ENCODE measurements at regions of chr21 and their contacts with region 1.

Region 1: DNA sequence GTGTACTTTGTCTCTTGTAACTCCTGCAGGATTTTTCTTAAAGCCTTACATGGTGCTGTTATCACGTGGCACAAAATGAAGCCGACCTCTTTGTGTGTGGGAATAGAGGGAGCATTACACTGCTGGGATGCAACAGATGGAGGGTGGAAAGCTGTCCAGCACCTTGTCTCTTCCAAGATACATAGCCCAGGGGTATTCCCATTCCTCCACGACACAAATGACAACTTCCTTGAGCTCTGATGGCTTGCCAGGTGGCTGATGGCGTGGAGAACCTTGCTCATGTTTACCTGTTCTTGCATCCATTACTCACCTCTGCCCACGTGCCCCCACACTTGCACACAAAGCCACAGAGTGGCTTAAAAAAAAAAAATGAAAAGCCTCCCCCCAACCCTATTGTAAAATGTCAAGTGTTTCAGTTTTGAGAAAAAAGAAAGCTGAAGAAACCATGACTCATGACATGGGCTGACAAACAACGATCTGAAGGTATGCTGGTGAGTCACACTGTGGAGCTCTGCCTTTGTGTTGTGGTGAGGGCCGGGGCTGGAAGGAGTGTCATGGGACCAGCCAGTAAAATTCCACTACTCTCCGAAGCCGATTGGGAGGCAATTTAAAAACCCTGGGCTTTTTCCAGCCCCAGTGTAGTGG is 32.0 kb upstream of the ATP5PO start:
- DNase-seq: peak; percentile 64 to 97 (median 82)
- ATAC-seq: peak; percentile 56
- H3K4me3 ChIP-seq: peak overlapping the region; percentile 18 to 25
- H3K4me3 Mint-ChIP-seq: peak overlapping the region; percentile 75
- H3K27ac ChIP-seq: peak overlapping the region; percentile 94 to 95
- H3K27ac Mint-ChIP-seq: peak overlapping the region; percentile 99
- H3K4me1 ChIP-seq: peaks cover 66% of the 10 kb centered on the region
- H3K4me1 Mint-ChIP-seq: peaks cover 78% of the 10 kb centered on the region
- H3K27me3 ChIP-seq: no peaks in the 10 kb centered on the region
- H3K27me3 Mint-ChIP-seq: no peaks in the 10 kb centered on the region
- CTCF ChIP-seq: no peak

Region 2: GRCh38 chr21:33871171-33871570 is 76.4 kb before region 1 on chr21:
- CTCF ChIA-PET with region 1: no interaction called
- POLR2A ChIA-PET with region 1: no interaction called
- intact Hi-C with region 1: no loop called
- DNase-seq: no peak
- ATAC-seq: no peak
- H3K4me3 ChIP-seq: no peak overlapping the region
- H3K4me3 Mint-ChIP-seq: no peak overlapping the region
- H3K27ac ChIP-seq: no peak overlapping the region
- H3K27ac Mint-ChIP-seq: no peak overlapping the region
- H3K4me1 ChIP-seq: no peaks in the 10 kb centered on the region
- H3K4me1 Mint-ChIP-seq: no peaks in the 10 kb centered on the region
- H3K27me3 ChIP-seq: no peaks in the 10 kb centered on the region
- H3K27me3 Mint-ChIP-seq: no peaks in the 10 kb centered on the region
- CTCF ChIP-seq: no peak

Region 3: DNA sequence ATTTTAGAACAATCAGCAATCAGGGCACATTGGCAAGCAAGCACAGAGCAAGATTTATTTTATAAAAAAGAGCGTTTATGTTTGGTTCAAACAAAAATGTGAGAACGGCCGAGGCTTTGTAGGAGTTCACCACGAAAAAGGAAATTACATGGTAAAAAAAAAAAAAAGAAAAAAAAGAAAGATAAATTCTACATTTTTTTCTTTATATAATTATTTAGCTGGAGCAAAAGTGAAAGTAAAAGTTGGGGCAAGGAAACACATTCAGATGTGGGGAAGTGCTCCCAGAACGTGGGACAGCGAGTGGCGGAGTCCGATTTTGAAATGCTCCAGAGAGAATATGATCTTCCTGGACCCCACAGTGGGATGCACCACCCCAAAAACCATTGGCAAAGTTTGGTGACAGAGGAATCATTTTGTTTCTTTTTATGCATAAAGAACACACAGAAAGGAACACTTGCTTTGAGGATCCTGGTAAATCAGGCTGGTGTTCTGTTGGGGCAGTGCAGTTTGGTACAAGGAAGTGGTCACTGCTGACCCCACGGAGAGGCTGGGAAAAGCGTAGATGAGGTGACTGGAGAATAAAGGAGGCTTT is 15.7 kb before region 1 on chr21:
- CTCF ChIA-PET with region 1: interaction called, 41 read pairs
- POLR2A ChIA-PET with region 1: interaction called, 251 read pairs
- intact Hi-C with region 1: loop called (anchors 1 kb)
- DNase-seq: peak in 2 of 9 experiments; percentile 27 to 34
- ATAC-seq: peak; percentile 26
- H3K4me3 ChIP-seq: peak overlapping the region; percentile 70 to 85
- H3K4me3 Mint-ChIP-seq: peak overlapping the region; percentile 94
- H3K27ac ChIP-seq: peak overlapping the region; percentile 85 to 90
- H3K27ac Mint-ChIP-seq: peak overlapping the region; percentile 99
- H3K4me1 ChIP-seq: peaks cover 42% of the 10 kb centered on the region
- H3K4me1 Mint-ChIP-seq: peaks cover 46% of the 10 kb centered on the region
- H3K27me3 ChIP-seq: no peaks in the 10 kb centered on the region
- H3K27me3 Mint-ChIP-seq: no peaks in the 10 kb centered on the region
- CTCF ChIP-seq: no peak

Region 4: DNA sequence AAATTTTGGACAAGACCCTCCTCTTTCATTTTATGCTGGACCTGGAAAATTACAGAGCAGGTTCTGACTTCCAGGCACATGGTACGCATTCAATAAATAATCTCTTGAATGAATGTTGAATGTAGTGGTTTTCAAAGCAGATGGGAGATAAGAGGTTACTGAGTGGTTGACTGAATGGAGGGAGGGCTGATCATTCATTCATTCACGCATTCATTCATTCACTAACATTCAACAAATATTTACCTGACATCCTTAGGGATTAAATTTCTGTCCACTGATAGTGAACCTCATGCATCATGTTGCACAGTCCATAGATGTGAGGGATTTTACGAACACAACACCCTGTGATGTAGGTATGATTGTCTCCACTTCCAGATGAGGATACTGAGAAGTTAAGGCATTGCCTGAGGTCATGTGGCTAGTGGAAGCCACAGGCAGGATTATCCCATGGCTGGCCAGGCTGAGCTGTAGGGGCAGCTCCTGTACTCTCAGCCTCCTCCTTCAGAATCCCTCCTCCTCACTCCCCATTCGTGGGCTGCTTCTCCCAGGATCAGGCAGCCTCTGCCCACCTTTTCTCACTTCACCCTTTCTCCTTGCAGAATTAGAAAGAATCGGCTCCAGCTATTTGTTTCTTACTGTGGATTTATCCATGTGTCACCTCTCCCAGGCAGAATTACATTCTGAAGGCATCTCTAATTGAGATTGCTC is 16.4 kb after region 1 on chr21:
- CTCF ChIA-PET with region 1: interaction called, 6 read pairs
- POLR2A ChIA-PET with region 1: interaction called, 19 read pairs
- intact Hi-C with region 1: loop called in 1 of 2 experiments (anchors 1 kb)
- DNase-seq: peak in 1 of 9 experiments; percentile 19
- ATAC-seq: no peak
- H3K4me3 ChIP-seq: no peak overlapping the region
- H3K4me3 Mint-ChIP-seq: no peak overlapping the region
- H3K27ac ChIP-seq: no peak overlapping the region
- H3K27ac Mint-ChIP-seq: no peak overlapping the region
- H3K4me1 ChIP-seq: peaks cover 5% of the 10 kb centered on the region
- H3K4me1 Mint-ChIP-seq: peaks cover 26% of the 10 kb centered on the region
- H3K27me3 ChIP-seq: no peaks in the 10 kb centered on the region
- H3K27me3 Mint-ChIP-seq: no peaks in the 10 kb centered on the region
- CTCF ChIP-seq: no peak